ENCODE measurements at regions of chr4 and their contacts with region 1.

Region 1: DNA sequence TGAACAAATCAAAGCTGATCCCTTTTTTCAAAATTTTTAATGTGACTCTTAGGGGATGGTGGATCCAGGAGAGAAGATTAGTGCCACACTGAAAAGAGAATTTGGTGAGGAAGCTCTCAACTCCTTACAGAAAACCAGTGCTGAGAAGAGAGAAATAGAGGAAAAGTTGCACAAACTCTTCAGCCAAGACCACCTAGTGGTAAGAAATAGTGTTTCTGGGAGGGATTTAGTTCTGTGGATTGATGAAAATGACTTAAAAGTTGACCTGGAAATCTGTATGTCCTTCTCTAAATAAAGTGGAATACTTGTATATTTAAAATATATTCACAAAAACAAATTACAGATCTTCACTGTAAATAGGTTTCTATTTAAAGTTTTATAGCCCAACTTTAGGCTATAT is 29.2 kb downstream of the NUDT9 start:
- DNase-seq: no peak
- ATAC-seq: no peak

Region 2: DNA sequence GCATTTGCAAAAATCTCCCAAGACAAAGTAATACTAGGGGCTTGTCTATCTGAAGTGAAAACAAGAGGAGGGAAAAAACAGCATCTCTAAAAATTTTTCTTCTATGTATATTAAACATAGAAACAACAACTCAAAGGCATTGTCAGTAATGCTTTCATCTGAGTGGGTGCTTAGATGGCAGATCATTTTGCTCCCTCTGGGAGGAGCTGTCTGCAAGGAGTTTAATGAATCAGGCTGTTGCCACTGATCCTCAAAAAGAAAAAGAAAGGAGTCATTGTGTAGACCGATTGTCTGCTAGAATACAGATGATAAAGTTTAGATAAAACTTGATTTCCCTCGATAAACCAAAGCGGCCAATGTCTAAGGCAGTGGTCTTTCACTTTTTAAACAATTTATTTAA is 181.4 kb before region 1 on chr4:
- intact Hi-C with region 1: loop called in 1 of 2 experiments (anchors 10 kb)
- DNase-seq: no peak
- ATAC-seq: peak in 1 of 2 donors; percentile 47

Region 3: DNA sequence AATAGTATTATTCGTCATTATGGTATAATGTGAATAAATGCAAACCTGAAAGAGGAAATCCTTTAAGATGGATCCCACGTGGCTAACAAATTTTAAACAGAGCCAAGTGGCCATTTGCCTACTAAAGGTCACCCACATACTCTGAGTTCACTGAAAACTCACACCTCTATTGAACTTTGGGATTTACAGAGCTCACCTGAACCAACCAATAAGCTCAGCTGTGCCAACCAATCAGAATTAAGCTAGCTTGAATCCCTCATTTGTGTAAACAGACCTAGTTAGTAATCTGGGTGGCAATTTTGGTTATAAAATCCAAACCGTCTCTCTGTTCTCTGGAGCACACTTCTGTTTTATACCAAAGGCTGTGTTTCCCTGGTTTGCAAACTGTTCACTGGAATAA is 34.6 kb before region 1 on chr4:
- intact Hi-C with region 1: loop called in 1 of 2 experiments (anchors 1 kb)
- DNase-seq: no peak
- ATAC-seq: no peak

Region 4: DNA sequence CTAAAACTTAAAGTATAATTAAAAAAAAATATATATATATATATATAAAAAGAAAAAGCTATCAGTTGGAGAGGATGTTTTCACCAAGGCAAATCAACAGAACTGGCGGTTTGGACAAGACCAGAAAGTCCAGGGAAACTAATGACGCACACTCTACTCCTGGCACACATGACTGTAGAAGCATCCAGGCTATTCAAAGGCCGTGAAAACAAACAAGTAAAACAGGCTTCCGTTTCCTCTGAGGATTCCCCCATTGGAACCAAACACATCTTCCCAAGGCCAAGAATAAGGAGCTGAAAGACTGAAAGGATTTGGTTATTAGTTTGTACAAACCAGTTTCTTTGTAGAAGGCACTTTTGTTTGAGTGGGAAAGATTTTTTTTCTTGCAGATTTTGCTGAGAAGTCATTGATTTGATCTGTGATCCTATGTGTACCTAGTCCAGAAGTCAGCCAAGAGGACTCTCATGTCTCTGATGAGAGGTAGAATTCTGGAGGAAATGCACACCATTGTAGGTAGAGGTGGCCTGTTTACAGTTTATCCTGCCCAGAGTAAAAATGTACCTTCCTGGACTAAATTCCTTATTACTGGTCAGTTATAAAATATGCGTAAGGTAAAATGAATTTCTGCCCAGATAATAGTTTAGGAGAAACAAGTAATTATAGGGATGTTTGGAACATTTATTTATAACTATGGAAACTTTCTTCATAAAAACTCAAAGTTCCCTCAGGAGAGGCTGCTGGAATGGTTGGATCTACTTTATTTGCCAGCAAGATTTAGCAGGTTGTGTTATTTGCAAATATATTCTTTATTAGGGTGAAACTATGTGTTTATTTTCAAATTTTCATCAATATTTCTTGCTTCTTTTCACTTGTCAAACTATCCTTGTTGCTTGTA is 265.1 kb after region 1 on chr4:
- intact Hi-C with region 1: no loop called
- DNase-seq: peak; percentile 37
- ATAC-seq: peak; percentile 93 to 94

Measured in left cardiac atrium (tissue), 4 donors.